Activated CD8-positive, alpha-beta T cell treated with anti-CD3 and anti-CD28 coated beads for 36 hours (primary cell): ENCODE measurements at regions of chr22 and their contacts with region 1.

Region 1: DNA sequence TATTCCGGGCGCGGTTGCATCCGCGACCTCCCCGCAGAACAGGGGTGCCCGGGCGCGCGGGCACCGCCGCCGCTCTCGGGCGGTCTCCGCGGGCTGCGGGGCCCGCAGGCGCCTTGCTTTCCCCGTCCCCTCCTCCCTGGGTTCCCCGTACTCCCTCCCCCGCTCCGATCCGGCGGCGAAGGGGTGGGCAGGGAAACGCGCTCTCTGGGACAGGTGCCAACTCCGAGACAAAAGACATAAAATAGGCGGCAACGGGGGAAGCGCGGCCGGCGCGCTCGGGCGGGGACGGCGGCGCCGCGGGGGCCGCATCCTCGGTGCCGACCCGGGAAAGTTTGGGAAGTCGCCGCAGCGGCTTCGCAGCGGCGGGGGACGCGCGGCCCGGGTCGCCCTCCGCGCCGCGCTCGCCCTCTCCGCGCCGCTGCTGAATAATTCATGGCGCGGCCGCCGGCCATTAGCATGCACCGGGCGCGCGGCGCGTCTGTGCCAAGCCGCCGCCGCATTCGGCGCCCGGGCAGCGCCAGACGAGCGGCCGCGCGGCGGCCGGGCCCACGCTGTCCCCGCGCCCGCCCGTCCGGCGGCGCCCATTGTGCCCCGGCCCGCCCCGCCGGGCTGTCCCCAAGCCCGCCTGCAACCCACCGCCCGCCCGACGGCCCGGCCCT is 78.7 kb upstream of the PPARA start:
- DNase-seq: peak; percentile 67
- ATAC-seq: peak; percentile 9
- H3K4me3 Mint-ChIP-seq: peak overlapping the region; percentile 75
- H3K27ac Mint-ChIP-seq: no peak overlapping the region
- H3K4me1 Mint-ChIP-seq: peaks cover 27% of the 10 kb centered on the region
- H3K27me3 Mint-ChIP-seq: peaks cover 6% of the 10 kb centered on the region
- CTCF ChIP-seq: no peak

Region 2: GRCh38 chr22:46013460-46014416 is 57.8 kb before region 1 on chr22:
- CTCF ChIA-PET with region 1: interaction called, 11 read pairs
- POLR2A ChIA-PET with region 1: interaction called, 3 read pairs
- intact Hi-C with region 1: no loop called
- DNase-seq: peak; percentile 95
- ATAC-seq: peak; percentile 99
- H3K4me3 Mint-ChIP-seq: peak overlapping the region; percentile 76
- H3K27ac Mint-ChIP-seq: peak overlapping the region; percentile 87
- H3K4me1 Mint-ChIP-seq: peaks cover 4% of the 10 kb centered on the region
- H3K27me3 Mint-ChIP-seq: no peaks in the 10 kb centered on the region
- CTCF ChIP-seq: peak; percentile 73

Region 3: DNA sequence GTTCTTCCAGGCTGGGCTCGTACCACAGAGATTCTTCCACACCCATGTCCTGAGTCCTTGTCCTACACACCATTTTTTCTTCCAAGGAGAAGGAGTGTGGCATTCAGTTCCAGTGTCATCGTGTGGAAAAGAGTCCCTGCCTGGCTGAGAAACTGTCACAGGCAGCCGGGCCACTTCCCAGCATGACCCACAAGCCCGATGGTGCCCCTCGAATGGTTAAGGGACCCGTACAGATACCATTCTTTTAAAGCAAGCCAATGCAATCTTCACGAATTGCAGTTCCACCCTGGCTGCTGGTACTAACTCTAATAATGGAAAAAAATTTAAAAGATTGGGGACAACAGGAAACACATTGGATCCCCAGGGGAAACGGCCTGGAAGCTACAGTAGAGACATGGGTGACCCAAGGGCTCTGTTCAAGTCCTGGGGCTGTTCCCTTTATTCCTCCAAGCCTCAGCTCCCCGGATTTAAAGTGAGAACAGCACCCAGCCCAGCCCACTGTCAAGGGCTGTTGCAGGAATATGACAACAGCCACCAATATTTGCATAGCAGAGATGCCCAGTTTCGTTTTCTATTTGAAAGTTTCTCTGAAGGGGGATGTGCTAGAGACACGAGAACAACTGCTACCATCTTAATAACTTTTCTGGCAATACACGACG is 13.7 kb before region 1 on chr22:
- CTCF ChIA-PET with region 1: interaction called, 3 read pairs
- POLR2A ChIA-PET with region 1: interaction called, 14 read pairs
- intact Hi-C with region 1: no loop called
- DNase-seq: peak; percentile 50
- ATAC-seq: peak; percentile 75
- H3K4me3 Mint-ChIP-seq: peak overlapping the region; percentile 32
- H3K27ac Mint-ChIP-seq: peak overlapping the region; percentile 81
- H3K4me1 Mint-ChIP-seq: peaks cover 38% of the 10 kb centered on the region
- H3K27me3 Mint-ChIP-seq: peaks cover 4% of the 10 kb centered on the region
- CTCF ChIP-seq: no peak